Activated T-helper 2 cell treated with anti-CD3 and anti-CD28 coated beads, Interferon-gamma antibody, Interleukin-2, Interleukin-4, amounts not matched to agents 10 μg/mL and 5 μg/mL and 100 μg/mL, durations not matched to agents 14 hours and 24 hours and 36 hours (primary cell): ENCODE measurements at regions of chr12 and their contacts with region 1.

Region 1: GRCh38 chr12:47742253-47742825 is 16.3 kb downstream of the RAPGEF3 start:
- DNase-seq: peak; percentile 63
- H3K4me3 Mint-ChIP-seq: no peak overlapping the region
- H3K27ac Mint-ChIP-seq: no peak overlapping the region
- H3K4me1 Mint-ChIP-seq: peaks cover 6% of the 10 kb centered on the region
- H3K27me3 Mint-ChIP-seq: peaks cover 16% of the 10 kb centered on the region

Region 2: GRCh38 chr12:47767216-47767724 is 24.9 kb after region 1 on chr12:
- intact Hi-C with region 1: loop called (anchors 1 kb)
- DNase-seq: peak; percentile 53
- H3K4me3 Mint-ChIP-seq: no peak overlapping the region
- H3K27ac Mint-ChIP-seq: no peak overlapping the region
- H3K4me1 Mint-ChIP-seq: peaks cover 5% of the 10 kb centered on the region
- H3K27me3 Mint-ChIP-seq: peaks cover 19% of the 10 kb centered on the region

Region 3: DNA sequence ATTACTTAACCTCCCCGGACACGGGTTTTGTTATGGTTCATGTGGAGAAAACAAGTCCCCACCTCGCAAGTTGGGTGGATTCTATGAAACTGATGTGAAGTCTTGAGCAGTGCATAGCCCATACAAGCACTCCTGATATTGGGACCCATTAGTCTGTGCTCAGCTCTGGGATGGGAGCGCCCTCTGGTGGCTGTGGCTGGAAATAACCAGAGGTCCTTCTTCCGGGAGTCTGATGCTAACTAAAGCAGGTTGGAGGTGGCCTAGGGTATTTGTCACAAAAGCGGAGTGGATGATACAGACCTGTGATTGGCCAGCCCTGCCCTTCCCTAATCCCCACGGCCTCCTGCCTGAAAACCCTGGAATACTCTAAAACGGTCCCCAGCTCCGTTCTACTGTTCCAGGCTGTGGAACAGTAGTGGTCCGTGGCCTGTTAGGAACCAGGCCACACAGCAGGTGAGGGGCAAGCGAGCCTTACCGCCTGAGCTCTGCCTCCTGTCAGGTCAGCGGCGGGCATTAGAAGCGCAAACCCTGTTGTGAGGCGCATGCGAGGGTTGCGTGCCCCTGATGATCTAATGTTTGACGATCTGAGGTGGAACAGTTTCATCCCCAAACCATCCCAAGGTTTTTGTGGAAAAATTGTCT is 37.1 kb after region 1 on chr12:
- intact Hi-C with region 1: loop called (anchors 1 kb)
- DNase-seq: peak; percentile 85
- H3K4me3 Mint-ChIP-seq: no peak overlapping the region
- H3K27ac Mint-ChIP-seq: no peak overlapping the region
- H3K4me1 Mint-ChIP-seq: peaks cover 27% of the 10 kb centered on the region
- H3K27me3 Mint-ChIP-seq: no peaks in the 10 kb centered on the region

Region 4: DNA sequence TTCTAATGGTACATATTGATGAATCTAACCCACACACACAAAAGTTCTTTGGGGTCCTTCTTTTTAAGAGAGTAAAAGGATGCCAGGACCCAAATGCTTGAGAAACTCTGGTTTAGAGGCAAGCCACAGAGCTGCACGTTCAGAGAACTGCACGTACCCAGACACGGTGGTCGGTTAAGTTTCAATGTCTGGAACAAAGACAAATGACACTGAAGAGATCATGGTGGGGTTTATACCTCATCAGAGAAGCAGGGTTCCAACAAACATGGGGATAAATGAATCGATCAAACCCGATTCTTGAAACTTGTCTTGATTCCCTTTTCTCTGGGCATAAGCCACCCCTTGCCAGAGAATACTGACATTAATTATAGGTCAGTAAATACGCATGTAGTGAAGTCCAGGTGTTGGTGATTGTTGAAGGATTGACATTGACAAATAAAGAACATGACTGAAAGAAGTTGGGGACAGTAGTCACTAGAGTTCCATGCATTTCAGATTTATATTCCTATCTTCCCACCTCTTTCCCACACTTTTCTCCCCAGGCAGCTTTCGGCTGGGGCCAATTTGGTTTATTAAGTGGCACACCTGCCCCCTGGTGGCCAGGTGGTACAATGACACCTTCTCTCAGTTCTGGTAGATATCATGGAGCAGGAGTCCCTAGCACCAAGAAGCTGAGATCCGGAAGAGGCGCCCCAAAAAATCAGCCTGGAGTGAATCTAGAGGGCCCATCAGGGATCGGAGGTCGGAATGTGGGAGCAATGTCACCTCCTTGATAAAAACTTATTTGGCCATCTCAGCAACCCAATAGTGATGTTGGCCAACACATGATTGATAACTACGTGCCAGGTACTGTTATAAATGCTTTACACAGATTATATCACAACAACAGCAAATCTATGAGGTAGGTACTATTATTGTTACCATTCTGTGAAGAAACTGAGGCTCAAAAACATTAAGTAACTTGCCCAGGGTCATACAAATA is 95.1 kb after region 1 on chr12:
- intact Hi-C with region 1: loop called (anchors 1 kb)
- DNase-seq: no peak
- H3K4me3 Mint-ChIP-seq: no peak overlapping the region
- H3K27ac Mint-ChIP-seq: no peak overlapping the region
- H3K4me1 Mint-ChIP-seq: peaks cover 49% of the 10 kb centered on the region
- H3K27me3 Mint-ChIP-seq: no peaks in the 10 kb centered on the region